Common myeloid progenitor, CD34-positive (primary cell): ENCODE measurements at regions of chr9 and their contacts with region 1.

Region 1: DNA sequence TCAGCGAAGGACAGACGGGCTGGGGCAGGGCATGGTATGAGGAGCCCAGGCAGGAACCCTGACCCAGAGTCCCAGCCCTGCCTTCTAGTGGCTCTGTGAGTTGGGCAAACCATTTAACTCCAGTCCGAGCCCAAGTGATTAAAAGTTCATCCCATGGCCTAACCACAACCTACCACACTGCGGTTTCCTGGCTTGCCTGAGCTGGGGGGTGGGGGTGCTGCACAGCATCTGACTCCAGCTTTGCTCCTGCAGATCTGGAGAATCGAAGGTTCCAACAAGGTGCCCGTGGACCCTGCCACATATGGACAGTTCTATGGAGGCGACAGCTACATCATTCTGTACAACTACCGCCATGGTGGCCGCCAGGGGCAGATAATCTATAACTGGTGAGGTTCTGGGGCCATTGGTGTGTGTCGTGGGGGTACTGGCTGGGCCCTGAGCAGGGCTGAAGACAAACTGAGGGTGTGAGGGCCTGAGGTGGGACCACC is 49.0 kb downstream of the STOM start:
- DNase-seq: peak; percentile 48 to 78 (median 77)
- H3K4me3 ChIP-seq: peak overlapping the region in 2 of 7 experiments; percentile 48 to 58
- H3K27ac ChIP-seq: no peak overlapping the region
- H3K4me1 ChIP-seq: peaks cover 0 to 18% (median 12%) of the 10 kb centered on the region in 4 experiments
- H3K27me3 ChIP-seq: no peaks in the 10 kb centered on the region

Region 2: DNA sequence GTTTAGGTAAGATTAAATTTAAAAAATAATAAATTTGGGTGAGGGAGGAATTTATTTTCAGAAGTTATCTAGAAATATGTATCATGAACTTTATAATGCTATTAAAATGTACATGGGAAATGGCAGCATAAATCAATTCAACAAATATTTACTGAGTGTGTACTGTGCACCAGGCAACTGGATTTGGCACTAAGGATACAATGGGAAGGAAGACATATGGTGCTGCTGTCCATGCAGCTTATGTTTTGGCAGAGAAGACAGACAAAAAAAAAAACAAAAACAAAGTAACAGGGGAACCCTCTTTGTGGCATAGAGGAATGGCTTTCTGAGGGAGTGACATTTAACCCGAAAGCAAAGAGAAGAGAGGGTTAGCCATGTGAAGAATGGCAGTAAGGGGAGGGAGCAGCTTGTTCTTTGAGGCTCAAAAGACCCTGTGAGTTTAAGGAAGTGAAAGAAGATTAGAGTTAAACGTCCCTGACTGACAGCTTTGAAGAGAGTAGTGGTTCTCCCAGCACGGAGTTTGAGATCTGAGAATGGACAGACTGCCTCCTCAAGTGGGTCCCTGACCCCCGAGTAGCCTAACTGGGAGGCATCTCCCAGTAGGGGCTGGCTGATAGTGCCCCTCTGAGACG is 222.4 kb before region 1 on chr9:
- CTCF ChIA-PET with region 1: no interaction called
- POLR2A ChIA-PET with region 1: no interaction called
- DNase-seq: no peak
- H3K4me3 ChIP-seq: no peak overlapping the region
- H3K27ac ChIP-seq: no peak overlapping the region
- H3K4me1 ChIP-seq: no peaks in the 10 kb centered on the region
- H3K27me3 ChIP-seq: no peaks in the 10 kb centered on the region

Region 3: DNA sequence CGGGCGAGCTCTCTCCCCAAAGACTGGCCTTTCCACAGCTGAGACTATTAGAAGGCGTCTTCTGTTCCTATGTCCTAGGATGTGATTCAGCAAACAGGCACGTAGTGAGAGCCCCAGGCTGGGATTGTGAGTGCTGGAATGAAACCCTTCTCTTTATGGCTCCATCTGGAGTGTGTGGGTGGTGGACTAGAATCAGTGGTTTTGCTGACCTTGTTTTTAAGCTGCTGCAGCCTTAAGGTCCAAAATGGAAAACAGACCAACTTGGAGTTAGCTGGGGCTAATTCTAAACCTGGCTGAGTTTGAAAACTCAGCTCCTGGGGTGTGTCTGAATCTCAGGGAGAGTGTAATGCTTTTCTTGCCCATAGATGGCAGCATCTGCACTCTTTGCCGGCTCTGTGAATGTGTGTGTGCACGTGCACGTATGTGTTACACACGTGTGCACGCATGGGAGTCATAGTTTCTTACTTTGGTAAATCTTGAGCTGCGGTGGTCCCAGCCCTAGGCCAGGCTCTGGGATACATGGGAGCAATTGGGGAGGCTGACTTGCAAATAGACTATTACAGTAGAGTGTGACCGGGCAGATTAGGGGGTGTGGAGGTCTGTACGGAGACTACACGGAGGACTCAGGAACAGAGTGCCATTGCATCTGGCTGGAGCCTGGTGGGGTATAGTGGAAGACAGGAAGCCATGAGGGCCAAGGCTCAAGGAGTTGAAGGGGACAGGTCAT is 42.4 kb before region 1 on chr9:
- CTCF ChIA-PET with region 1: interaction called, 21 read pairs
- POLR2A ChIA-PET with region 1: no interaction called
- DNase-seq: peak; percentile 59 to 87 (median 83)
- H3K4me3 ChIP-seq: peak overlapping the region in 1 of 7 experiments; percentile 29
- H3K27ac ChIP-seq: no peak overlapping the region
- H3K4me1 ChIP-seq: peaks cover 14 to 92% (median 68%) of the 10 kb centered on the region in 4 experiments
- H3K27me3 ChIP-seq: no peaks in the 10 kb centered on the region

Region 4: GRCh38 chr9:121308765-121309164 is 12.3 kb before region 1 on chr9:
- CTCF ChIA-PET with region 1: interaction called, 11 read pairs
- POLR2A ChIA-PET with region 1: no interaction called
- DNase-seq: no peak
- H3K4me3 ChIP-seq: no peak overlapping the region
- H3K27ac ChIP-seq: no peak overlapping the region
- H3K4me1 ChIP-seq: no peaks in the 10 kb centered on the region
- H3K27me3 ChIP-seq: no peaks in the 10 kb centered on the region

Region 5: DNA sequence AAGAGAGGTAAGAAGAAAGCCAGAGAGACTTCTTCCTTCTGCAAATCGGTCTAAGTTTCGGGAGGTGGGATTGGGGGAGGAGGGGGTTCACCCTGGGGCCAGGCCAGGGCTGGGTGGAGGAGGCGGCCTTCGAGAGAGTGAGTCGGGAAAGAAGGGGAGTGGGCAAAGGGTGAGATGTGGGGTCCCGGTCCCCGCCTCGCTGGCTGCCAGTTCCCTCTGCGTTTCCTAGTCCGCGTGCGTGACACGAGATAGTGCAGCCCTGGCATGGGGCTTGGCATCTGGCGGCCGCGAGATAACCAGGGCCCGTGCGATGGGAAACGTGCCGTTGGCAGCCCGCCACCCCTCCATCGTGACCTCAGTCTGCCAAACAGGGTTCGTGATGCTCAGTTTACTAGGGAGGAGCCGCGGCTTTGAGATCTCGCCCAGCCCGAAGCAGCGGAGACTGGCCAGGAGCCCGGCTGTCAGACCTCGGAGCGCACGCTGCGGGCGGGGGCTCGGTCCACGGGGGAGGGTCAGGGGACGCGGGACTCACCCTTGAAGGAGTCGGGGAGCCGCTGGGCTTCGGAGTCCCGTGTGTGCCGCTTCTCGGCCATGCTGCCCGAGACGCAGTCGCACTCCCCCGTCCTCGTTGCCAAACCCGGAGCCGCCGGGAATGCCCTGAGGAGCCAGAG is 48.7 kb after region 1 on chr9 and contains the start of gene STOM:
- CTCF ChIA-PET with region 1: interaction called, 158 read pairs
- POLR2A ChIA-PET with region 1: interaction called, 3 read pairs
- DNase-seq: peak; percentile 97 to 99 (median 99)
- H3K4me3 ChIP-seq: peak within 1 kb of the TSS; percentile 27 to 86 (median 71)
- H3K27ac ChIP-seq: peak within 1 kb of the TSS; percentile 96 to 98
- H3K4me1 ChIP-seq: peaks cover 35 to 81% (median 65%) of the 10 kb centered on the region in 4 experiments
- H3K27me3 ChIP-seq: no peaks in the 10 kb centered on the region

Region 6: DNA sequence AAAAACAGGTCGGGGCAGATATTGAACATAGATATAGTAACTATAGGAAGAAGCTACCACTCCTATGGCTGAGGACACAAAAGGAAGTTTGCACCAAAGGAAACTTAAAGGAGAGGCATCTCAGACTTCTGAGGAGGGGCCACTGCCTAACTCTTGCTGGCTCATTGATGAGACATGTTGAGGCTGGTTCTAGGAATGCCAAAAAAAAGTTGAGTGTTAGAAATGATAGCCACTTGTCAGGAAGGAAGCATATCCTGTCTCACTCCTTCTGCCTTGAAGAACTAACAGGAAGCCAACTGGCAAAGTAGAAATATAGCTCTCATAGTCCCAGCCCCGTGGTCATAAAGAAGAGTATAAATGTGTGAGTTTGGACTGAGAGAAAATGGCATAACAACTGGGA is 72.3 kb after region 1 on chr9:
- CTCF ChIA-PET with region 1: interaction called, 236 read pairs
- POLR2A ChIA-PET with region 1: no interaction called
- DNase-seq: no peak
- H3K4me3 ChIP-seq: peak overlapping the region in 2 of 7 experiments; percentile 22 to 40
- H3K27ac ChIP-seq: no peak overlapping the region
- H3K4me1 ChIP-seq: peaks cover 14 to 48% (median 19%) of the 10 kb centered on the region in 4 experiments
- H3K27me3 ChIP-seq: no peaks in the 10 kb centered on the region